ENCODE measurements at regions of chr14 and their contacts with region 1.

Region 1: DNA sequence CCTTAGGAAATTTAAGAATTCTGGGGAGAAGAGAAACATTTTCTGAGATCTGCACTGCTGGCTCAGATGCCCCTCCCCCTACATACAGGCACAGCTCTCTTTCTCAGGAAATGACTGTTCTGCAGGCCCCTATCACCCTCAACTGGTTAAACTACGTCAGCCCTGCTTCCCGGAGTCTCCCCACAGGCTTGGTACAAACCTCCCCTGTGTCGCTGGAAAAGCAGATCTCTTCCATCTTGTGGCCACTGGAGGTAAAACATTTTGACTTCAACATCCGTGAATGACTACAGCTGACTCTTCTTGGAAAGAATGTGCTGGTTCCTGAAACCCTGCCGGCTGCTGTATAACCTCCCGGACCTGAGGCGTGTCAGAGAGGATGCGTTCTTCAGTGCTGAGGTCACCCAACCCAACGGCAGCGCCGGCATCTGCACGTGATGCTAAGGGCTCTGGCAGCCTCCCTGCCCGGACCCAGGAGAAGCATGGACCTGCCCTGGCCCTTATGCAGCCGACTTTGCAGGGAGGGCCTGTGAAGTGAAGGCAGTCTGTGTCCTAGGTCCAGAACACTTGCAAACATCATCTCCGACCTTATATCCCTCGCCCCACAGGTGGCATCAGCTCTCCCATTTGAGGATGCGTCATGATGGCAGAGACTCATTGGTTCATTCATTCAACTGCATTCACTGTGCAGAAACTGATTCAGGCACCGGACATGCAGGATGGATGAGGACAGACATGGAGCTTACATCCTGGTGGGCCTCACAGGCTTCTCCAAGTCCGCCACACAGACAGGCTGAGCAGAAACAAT is 129.3 kb downstream of the GCH1 start:
- DNase-seq: peak; percentile 98
- H3K4me3 Mint-ChIP-seq: peak overlapping the region; percentile 42
- H3K27ac Mint-ChIP-seq: peak overlapping the region; percentile 93
- H3K4me1 Mint-ChIP-seq: peaks cover 21% of the 10 kb centered on the region
- H3K27me3 Mint-ChIP-seq: no peaks in the 10 kb centered on the region
- CTCF ChIP-seq: peak; percentile 49

Region 2: GRCh38 chr14:54509546-54510501 is 263.5 kb before region 1 on chr14 and contains the start of gene CGRRF1:
- CTCF ChIA-PET with region 1: interaction called, 14 read pairs
- POLR2A ChIA-PET with region 1: no interaction called
- intact Hi-C with region 1: loop called (anchors 10 kb)
- DNase-seq: peak; percentile 97
- H3K4me3 Mint-ChIP-seq: peak within 1 kb of the TSS; percentile 96
- H3K27ac Mint-ChIP-seq: peak within 1 kb of the TSS; percentile 86
- H3K4me1 Mint-ChIP-seq: peaks cover 20% of the 10 kb centered on the region
- H3K27me3 Mint-ChIP-seq: no peaks in the 10 kb centered on the region
- CTCF ChIP-seq: peak; percentile 30
- total RNA-seq, gene CGRRF1: 17.5 and 22.3 TPM in 2 replicates

Region 3: DNA sequence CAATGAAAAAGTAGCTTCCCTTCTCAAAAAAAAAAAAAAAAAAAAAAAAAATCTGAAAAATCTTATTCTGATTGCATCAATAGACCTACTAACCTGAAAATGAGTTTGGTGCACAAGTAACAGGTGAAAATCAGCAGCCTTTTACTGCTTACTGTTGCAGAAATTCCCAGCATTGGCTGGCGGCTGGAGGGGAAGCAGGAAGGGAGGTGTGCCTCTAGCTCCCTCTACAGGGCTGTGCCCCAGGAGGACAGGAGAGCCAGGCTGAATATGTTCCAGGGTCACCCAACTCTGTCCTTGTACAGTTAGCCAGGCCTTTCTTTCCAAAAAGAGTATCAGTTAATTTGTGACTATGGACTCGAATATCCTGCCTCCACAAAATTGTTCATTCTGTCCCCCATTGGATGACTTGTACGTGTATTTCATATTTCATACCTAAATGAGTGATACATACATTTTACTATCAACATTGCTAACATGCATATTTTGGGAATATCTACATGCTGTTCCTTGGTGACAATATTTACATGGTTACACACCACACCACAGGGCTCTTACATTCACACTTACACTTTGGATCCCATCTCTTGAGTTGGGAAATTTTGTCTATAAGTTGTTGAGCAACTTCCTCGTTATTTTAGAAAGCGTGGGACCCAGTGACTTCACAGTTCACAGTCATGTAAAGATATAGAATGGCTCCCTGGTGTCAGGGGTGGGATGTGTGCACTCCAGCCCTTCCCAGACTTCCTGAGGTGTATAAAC is 81.7 kb before region 1 on chr14:
- CTCF ChIA-PET with region 1: interaction called, 21 read pairs
- POLR2A ChIA-PET with region 1: interaction called, 5 read pairs
- intact Hi-C with region 1: loop called (anchors 1 kb)
- DNase-seq: peak; percentile 79
- H3K4me3 Mint-ChIP-seq: no peak overlapping the region
- H3K27ac Mint-ChIP-seq: no peak overlapping the region
- H3K4me1 Mint-ChIP-seq: peaks cover 27% of the 10 kb centered on the region
- H3K27me3 Mint-ChIP-seq: no peaks in the 10 kb centered on the region
- CTCF ChIP-seq: peak; percentile 82

Region 4: GRCh38 chr14:54762296-54762695 is 11.1 kb before region 1 on chr14:
- CTCF ChIA-PET with region 1: interaction called, 16 read pairs
- POLR2A ChIA-PET with region 1: interaction called, 3 read pairs
- intact Hi-C with region 1: no loop called
- DNase-seq: no peak
- H3K4me3 Mint-ChIP-seq: no peak overlapping the region
- H3K27ac Mint-ChIP-seq: no peak overlapping the region
- H3K4me1 Mint-ChIP-seq: no peaks in the 10 kb centered on the region
- H3K27me3 Mint-ChIP-seq: no peaks in the 10 kb centered on the region
- CTCF ChIP-seq: no peak

Region 5: DNA sequence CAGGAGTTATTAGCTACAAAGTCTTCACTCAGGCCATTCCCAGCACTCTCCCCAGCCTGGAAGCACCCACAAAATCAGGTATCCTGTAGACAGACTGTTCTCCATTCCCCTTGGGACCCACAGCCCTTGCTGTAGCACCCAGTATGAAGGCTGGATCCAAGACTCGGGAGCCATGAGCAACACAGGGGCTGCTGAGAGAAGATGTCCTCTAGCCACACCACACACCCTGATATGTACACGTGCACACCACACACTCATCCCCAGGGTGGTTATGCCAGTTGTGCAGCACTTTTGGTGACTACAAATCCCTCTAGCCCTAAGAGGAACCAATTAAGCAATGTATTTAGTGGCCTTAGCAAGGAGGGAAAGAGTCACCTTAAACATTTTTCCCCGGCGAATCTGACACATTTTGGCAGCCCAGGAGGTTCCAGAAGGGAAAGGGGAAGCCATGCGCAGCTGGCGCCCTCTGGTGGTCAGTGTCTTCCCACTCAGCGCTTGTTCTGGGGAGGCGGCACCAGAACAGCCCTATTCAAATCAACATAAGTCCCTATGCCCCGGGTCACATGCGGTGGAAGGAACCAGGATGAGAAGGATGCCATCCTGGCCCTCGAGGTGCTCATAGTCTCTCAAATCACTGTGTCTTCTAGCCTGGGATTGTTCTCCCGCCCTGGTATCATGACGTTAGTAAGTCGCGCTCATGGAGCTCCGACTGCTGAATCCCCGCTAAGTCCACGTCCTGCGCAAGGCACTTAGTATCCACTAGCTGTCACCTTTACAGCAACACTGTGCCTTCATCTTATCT is 32.3 kb after region 1 on chr14:
- CTCF ChIA-PET with region 1: interaction called, 9 read pairs
- POLR2A ChIA-PET with region 1: interaction called, 3 read pairs
- intact Hi-C with region 1: loop called (anchors 5 kb)
- DNase-seq: peak; percentile 86
- H3K4me3 Mint-ChIP-seq: no peak overlapping the region
- H3K27ac Mint-ChIP-seq: no peak overlapping the region
- H3K4me1 Mint-ChIP-seq: peaks cover 12% of the 10 kb centered on the region
- H3K27me3 Mint-ChIP-seq: peaks cover under 1% of the 10 kb centered on the region
- CTCF ChIP-seq: peak; percentile 91